ENCODE measurements at regions of chr7 and their contacts with region 1.

Region 1: GRCh38 chr7:82740246-82740848 is 296.8 kb upstream of the CACNA2D1 start:
- DNase-seq: peak; percentile 67
- H3K4me3 Mint-ChIP-seq: no peak overlapping the region
- H3K27ac Mint-ChIP-seq: no peak overlapping the region
- H3K4me1 Mint-ChIP-seq: no peaks in the 10 kb centered on the region
- H3K27me3 Mint-ChIP-seq: peaks cover 55% of the 10 kb centered on the region
- CTCF ChIP-seq: peak; percentile 62

Region 2: GRCh38 chr7:83271212-83272099 is 531.1 kb after region 1 on chr7:
- CTCF ChIA-PET with region 1: no interaction called
- POLR2A ChIA-PET with region 1: no interaction called
- intact Hi-C with region 1: loop called (anchors 1 kb)
- DNase-seq: peak; percentile 30
- H3K4me3 Mint-ChIP-seq: no peak overlapping the region
- H3K27ac Mint-ChIP-seq: no peak overlapping the region
- H3K4me1 Mint-ChIP-seq: no peaks in the 10 kb centered on the region
- H3K27me3 Mint-ChIP-seq: peaks cover 97% of the 10 kb centered on the region
- CTCF ChIP-seq: peak; percentile 33

Measured in MCF 10A (cell line).